OCI-LY7 (cell line): ENCODE measurements at regions of chr3 and their contacts with region 1.

Region 1: GRCh38 chr3:10357592-10358308 is 36.8 kb upstream of the SEC13 start:
- DNase-seq: peak; percentile 80
- H3K4me3 ChIP-seq: peak overlapping the region; percentile 56
- H3K27ac ChIP-seq: peak overlapping the region; percentile 81
- H3K4me1 ChIP-seq: peaks cover 96% of the 10 kb centered on the region
- CTCF ChIP-seq: no peak

Region 2: DNA sequence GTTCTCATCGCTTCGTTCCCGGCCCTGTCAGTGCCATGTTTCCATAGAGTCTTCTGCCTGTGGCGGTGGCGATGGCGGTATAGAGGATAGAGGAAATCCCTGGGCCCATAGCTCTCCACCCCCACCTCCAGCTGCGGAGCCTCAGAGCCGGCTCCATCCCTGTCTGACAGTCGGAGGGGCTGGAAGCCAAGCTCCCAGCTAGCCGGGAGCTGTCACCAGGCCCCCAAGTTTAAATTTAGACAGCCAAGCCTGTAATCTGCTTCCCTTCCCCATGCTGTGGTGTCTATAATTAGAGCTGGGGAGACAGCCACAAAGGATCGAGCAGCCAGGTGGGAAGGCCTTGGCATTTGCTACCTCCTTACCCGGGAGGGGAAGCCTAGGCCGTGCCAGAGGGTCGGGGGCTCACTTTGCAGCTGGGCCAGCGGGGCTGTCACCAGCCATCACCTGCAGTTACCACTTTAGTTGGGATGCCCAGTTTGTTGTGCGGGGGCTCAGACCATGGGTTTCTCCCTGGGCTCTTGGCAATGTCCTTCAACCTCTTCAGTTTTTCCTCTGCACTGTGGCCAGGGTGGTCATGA is 19.5 kb after region 1 on chr3:
- CTCF ChIA-PET with region 1: no interaction called
- POLR2A ChIA-PET with region 1: interaction called, 9 read pairs
- intact Hi-C with region 1: loop called (anchors 1 kb)
- DNase-seq: no peak
- H3K4me3 ChIP-seq: no peak overlapping the region
- H3K27ac ChIP-seq: peak overlapping the region; percentile 74
- H3K4me1 ChIP-seq: peaks cover 79% of the 10 kb centered on the region
- CTCF ChIP-seq: no peak

Region 3: DNA sequence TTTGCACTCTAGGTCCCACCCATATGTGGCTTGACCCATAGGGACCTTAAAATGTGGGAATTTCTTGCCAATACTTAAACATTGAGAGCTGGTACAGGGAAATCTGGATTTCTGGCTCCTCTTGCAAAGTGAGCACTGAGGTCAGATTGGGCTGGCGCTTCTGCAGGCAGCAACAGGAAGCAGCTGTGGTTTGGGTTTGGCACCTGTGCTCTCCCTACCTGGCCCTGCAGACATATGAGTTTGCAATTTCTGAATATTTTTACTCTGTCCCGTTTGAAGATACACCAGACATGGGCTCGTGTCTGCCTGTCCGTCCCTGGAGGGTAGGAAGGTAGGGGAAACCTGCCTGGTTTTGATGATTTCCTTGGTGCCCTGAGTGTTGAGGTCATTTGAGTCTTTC is 37.9 kb after region 1 on chr3:
- CTCF ChIA-PET with region 1: interaction called, 3 read pairs
- POLR2A ChIA-PET with region 1: no interaction called
- intact Hi-C with region 1: loop called (anchors 1 kb)
- DNase-seq: peak; percentile 88
- H3K4me3 ChIP-seq: peak overlapping the region; percentile 43
- H3K27ac ChIP-seq: peak overlapping the region; percentile 97
- H3K4me1 ChIP-seq: peaks cover 96% of the 10 kb centered on the region
- CTCF ChIP-seq: no peak